Gastrocnemius medialis (tissue), 4 donors: ENCODE measurements at regions of chr4 and their contacts with region 1.

Region 1: GRCh38 chr4:1346781-1347409 is at the start of gene UVSSA:
- DNase-seq: peak; percentile 100
- ATAC-seq: peak; percentile 86 to 88
- H3K4me3 ChIP-seq: peak within 1 kb of the TSS; percentile 76 to 98 (median 88)
- H3K27ac ChIP-seq: peak within 1 kb of the TSS; percentile 88 to 99 (median 97)
- H3K4me1 ChIP-seq: peaks cover 20 to 31% of the 10 kb centered on the region in 2 donors
- H3K27me3 ChIP-seq: no peaks in the 10 kb centered on the region
- CTCF ChIP-seq: peak in 1 of 5 experiments; percentile 16
- POLR2A ChIP-seq: peak; percentile 92 to 97
- total RNA-seq, gene UVSSA: 8.5 to 13.2 (median 12.3) TPM

Region 2: GRCh38 chr4:1011022-1011694 is 335.7 kb before region 1 on chr4 and contains the start of gene FGFRL1:
- in situ Hi-C with region 1: no loop called
- intact Hi-C with region 1: loop called (anchors 5 kb)
- DNase-seq: peak; percentile 87 to 88
- ATAC-seq: peak; percentile 62 to 63
- H3K4me3 ChIP-seq: peak within 1 kb of the TSS; percentile 63 to 97 (median 74)
- H3K27ac ChIP-seq: peak within 1 kb of the TSS; percentile 50 to 64 (median 62)
- H3K4me1 ChIP-seq: peaks cover 7 to 19% of the 10 kb centered on the region in 2 donors
- H3K27me3 ChIP-seq: peaks cover 19 to 23% (median 20%) of the 10 kb centered on the region in 3 donors
- CTCF ChIP-seq: no peak
- POLR2A ChIP-seq: peak in 1 of 2 donors; percentile 10
- total RNA-seq, gene FGFRL1: 10.4 to 32.4 (median 15.2) TPM

Region 3: DNA sequence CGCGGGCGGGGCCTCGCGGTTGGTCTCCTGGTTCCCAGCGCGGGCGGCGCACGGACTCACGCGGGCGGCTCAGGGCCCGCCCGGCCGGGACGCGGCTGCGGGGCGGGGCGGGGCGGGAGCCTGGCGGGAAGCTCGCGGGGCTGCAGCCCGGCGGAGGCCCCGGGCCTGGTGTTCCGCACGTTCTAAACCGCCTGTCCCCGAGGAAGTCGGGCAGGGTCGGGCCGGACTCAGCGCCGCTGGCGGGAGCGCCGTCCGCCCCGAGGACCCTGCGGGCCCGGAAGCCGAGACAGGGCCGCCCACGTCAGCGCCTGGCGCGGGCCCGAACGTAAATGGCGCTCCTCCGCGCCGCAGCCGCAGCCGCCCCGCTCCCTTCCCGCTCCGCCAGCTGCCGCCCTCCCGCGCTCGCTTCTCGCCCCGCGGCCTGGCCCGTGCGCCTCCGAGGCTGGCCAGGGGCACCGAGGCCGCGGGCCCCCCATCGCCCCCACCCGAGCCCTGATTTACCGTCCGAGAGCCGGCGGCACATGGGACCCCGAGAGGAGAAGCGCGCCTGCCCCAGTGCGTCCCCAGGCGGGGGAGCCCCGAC is 97.7 kb before region 1 on chr4:
- in situ Hi-C with region 1: loop called in 3 of 4 experiments (anchors 5 to 10 kb)
- intact Hi-C with region 1: loop called (anchors 1 kb)
- DNase-seq: peak; percentile 74 to 78
- ATAC-seq: peak; percentile 78 to 80
- H3K4me3 ChIP-seq: peak overlapping the region; percentile 68 to 85 (median 83)
- H3K27ac ChIP-seq: peak overlapping the region; percentile 94 to 97 (median 96)
- H3K4me1 ChIP-seq: peaks cover 45 to 73% of the 10 kb centered on the region in 2 donors
- H3K27me3 ChIP-seq: no peaks in the 10 kb centered on the region
- CTCF ChIP-seq: no peak
- POLR2A ChIP-seq: peak; percentile 23 to 62

Region 4: DNA sequence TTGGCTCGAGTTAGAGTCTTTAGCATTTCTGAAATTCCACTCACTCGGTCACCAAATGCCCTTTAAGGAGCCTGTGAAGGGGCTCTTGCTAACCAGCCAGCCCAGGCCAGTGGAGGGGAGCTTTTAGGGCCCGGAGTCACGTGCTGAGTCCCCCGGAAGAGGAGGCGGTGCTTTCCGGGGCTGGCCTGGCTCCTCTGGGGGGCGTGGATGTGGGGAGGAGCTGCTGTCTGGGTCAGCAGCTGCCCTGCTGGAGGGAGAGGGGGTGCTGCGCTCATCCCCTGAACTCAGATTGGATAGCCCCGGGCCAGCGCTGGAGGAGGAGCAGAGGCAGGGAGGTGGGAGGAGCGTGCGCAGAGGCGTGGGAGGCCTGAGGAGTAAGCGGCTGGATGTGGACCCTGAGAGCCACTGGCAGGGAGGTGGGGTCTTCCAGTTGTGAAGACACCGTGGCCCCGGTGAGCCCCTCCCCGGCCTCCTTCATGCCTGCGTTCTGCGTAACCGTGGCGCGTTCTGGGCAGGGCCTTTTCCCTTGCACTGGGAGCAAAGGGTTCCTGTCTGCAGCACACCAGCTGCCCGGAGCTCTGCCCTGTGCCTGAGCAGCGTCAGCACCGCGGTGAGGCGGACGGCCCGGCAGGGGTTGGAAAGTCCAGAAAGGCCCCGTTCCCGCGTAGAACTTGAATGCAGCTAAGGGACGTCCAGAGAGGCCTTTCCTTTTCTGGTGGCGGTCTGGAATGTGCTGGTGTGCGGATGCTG is 37.5 kb before region 1 on chr4:
- in situ Hi-C with region 1: no loop called
- intact Hi-C with region 1: no loop called
- DNase-seq: peak; percentile 67 to 78
- ATAC-seq: peak; percentile 85 to 87
- H3K4me3 ChIP-seq: peak overlapping the region; percentile 40 to 64 (median 48)
- H3K27ac ChIP-seq: peak overlapping the region; percentile 38 to 68 (median 58)
- H3K4me1 ChIP-seq: peaks cover 21 to 23% of the 10 kb centered on the region in 2 donors
- H3K27me3 ChIP-seq: no peaks in the 10 kb centered on the region
- CTCF ChIP-seq: no peak
- POLR2A ChIP-seq: no peak

Region 5: GRCh38 chr4:1403591-1404572 is 57.0 kb after region 1 on chr4:
- in situ Hi-C with region 1: no loop called
- intact Hi-C with region 1: no loop called
- DNase-seq: no peak
- ATAC-seq: no peak
- H3K4me3 ChIP-seq: peak overlapping the region in 1 of 4 donors; percentile 17
- H3K27ac ChIP-seq: no peak overlapping the region
- H3K4me1 ChIP-seq: peaks cover 0 to 6% of the 10 kb centered on the region in 2 donors
- H3K27me3 ChIP-seq: peaks cover 76 to 83% (median 82%) of the 10 kb centered on the region in 3 donors
- CTCF ChIP-seq: no peak
- POLR2A ChIP-seq: no peak

Region 6: GRCh38 chr4:1726146-1726934 is 379.4 kb after region 1 on chr4:
- in situ Hi-C with region 1: no loop called
- intact Hi-C with region 1: loop called (anchors 5 kb)
- DNase-seq: peak; percentile 64 to 88
- ATAC-seq: peak; percentile 67 to 74
- H3K4me3 ChIP-seq: no peak overlapping the region
- H3K27ac ChIP-seq: peak overlapping the region in 3 of 4 donors; percentile 35 to 65 (median 61)
- H3K4me1 ChIP-seq: peaks cover 9 to 11% of the 10 kb centered on the region in 2 donors
- H3K27me3 ChIP-seq: no peaks in the 10 kb centered on the region
- CTCF ChIP-seq: peak; percentile 86 to 98 (median 93)
- POLR2A ChIP-seq: no peak